ENCODE measurements at regions of chr19 and their contacts with region 1.

Region 1: DNA sequence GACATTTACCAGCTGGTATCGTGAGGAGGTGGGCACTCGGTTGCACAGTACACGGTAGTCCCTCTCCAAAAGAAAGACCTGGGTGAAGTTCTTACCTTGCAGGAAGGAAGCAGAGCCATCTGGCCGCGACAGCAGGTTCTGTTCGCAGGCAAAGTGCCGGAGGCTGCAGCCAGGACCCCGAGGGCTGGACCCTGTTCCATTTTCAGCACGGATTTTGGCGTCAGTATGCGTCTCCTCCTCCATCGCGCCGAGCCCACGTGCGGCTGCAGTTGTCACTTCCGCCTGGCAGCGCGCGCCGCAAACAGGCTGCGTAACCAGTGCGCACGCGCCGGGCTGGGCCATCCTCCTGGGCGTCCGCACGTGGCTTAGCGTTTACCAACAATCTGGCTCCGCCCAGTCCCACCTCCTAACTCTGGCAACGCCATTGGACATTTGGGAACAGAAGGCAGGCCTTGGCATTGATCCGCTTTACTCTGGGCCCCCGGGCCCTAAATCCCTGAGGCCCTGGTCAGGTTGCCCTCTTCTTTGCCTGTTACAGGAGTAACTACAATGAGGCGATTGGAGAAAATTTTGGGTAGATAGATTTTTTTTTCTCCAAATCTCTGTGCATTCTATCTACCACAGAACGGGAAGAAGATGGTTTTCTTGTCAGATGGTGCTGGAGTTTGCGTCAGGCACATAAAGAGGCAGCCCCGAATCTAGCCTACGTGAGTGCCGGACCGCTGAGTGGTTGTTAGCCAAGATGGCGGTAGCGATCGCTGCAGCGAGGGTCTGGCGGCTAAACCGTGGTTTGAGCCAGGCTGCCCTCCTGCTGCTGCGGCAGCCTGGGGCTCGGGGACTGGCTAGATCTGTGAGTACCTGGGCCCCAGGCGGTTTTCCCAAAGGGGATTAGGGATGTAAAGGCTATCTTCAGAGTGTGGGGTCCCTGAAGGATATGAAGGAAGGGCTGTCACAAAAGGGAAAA is at the starts of genes BCKDHA and EXOSC5:
- H3K4me3 Mint-ChIP-seq: peak within 1 kb of the TSS; percentile 97
- H3K27ac Mint-ChIP-seq: peak within 1 kb of the TSS; percentile 93
- H3K4me1 Mint-ChIP-seq: peaks cover 55% of the 10 kb centered on the region
- H3K27me3 Mint-ChIP-seq: no peaks in the 10 kb centered on the region

Region 2: GRCh38 chr19:41363753-41364523 is 33.4 kb before region 1 on chr19 and contains the start of gene B9D2:
- intact Hi-C with region 1: loop called (anchors 2 kb)
- H3K4me3 Mint-ChIP-seq: peak within 1 kb of the TSS; percentile 88
- H3K27ac Mint-ChIP-seq: peak within 1 kb of the TSS; percentile 100
- H3K4me1 Mint-ChIP-seq: peaks cover 52% of the 10 kb centered on the region
- H3K27me3 Mint-ChIP-seq: no peaks in the 10 kb centered on the region

Region 3: GRCh38 chr19:41426952-41427646 is 29.7 kb after region 1 on chr19 and contains the start of gene B3GNT8:
- intact Hi-C with region 1: loop called (anchors 5 kb)
- H3K4me3 Mint-ChIP-seq: peak within 1 kb of the TSS; percentile 83
- H3K27ac Mint-ChIP-seq: peak within 1 kb of the TSS; percentile 92
- H3K4me1 Mint-ChIP-seq: peaks cover 75% of the 10 kb centered on the region
- H3K27me3 Mint-ChIP-seq: no peaks in the 10 kb centered on the region